Activated naive CD4-positive, alpha-beta T cell treated with anti-CD3 and anti-CD28 coated beads for 36 hours (primary cell): ENCODE measurements at regions of chr2 and their contacts with region 1.

Region 1: GRCh38 chr2:197113275-197113711 is 186.8 kb upstream of the PGAP1 start:
- DNase-seq: no peak
- H3K4me3 Mint-ChIP-seq: no peak overlapping the region
- H3K27ac Mint-ChIP-seq: peak overlapping the region; percentile 28
- H3K4me1 Mint-ChIP-seq: peaks cover 22% of the 10 kb centered on the region
- H3K27me3 Mint-ChIP-seq: no peaks in the 10 kb centered on the region

Region 2: GRCh38 chr2:197097578-197098366 is 15.5 kb before region 1 on chr2:
- CTCF ChIA-PET with region 1: interaction called, 25 read pairs
- intact Hi-C with region 1: no loop called
- DNase-seq: no peak
- H3K4me3 Mint-ChIP-seq: no peak overlapping the region
- H3K27ac Mint-ChIP-seq: no peak overlapping the region
- H3K4me1 Mint-ChIP-seq: peaks cover 12% of the 10 kb centered on the region
- H3K27me3 Mint-ChIP-seq: no peaks in the 10 kb centered on the region

Region 3: DNA sequence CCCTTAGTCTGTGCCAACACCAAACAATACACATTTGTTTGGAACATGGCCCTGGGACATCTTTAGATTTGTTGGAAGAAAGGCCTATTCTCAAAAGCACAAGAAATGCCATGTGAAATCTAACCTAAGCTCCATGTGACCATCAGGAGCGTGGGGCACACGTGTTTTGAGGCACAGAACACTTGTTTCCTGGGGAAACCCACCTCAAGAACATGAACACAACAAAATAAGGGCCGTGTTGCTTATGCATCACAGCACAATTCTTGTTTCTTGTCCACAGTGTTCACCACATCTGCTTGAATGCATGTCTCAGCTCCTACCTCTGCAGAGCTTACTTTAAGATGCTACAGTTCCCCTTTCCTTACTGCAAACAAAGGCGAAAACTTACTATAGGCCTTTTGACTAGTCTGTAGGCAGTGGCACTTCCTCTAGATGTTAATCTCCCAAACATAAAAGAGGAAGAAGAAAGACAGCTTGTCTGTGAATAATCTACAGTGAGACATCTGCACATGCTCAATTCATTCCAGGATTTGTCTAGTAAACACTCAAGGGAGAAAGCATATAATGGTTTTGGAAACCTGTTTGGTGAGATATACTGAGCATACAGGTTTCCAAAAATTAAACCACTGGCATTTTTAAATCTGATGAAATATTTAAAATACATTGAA is 32.3 kb after region 1 on chr2:
- CTCF ChIA-PET with region 1: interaction called, 11 read pairs
- intact Hi-C with region 1: no loop called
- DNase-seq: peak; percentile 16
- H3K4me3 Mint-ChIP-seq: no peak overlapping the region
- H3K27ac Mint-ChIP-seq: peak overlapping the region; percentile 85
- H3K4me1 Mint-ChIP-seq: peaks cover 70% of the 10 kb centered on the region
- H3K27me3 Mint-ChIP-seq: no peaks in the 10 kb centered on the region

Region 4: GRCh38 chr2:197174539-197175094 is 61.3 kb after region 1 on chr2:
- CTCF ChIA-PET with region 1: interaction called, 78 read pairs
- intact Hi-C with region 1: no loop called
- DNase-seq: no peak
- H3K4me3 Mint-ChIP-seq: no peak overlapping the region
- H3K27ac Mint-ChIP-seq: no peak overlapping the region
- H3K4me1 Mint-ChIP-seq: peaks cover 48% of the 10 kb centered on the region
- H3K27me3 Mint-ChIP-seq: no peaks in the 10 kb centered on the region

Region 5: GRCh38 chr2:197198890-197199289 is 85.6 kb after region 1 on chr2:
- CTCF ChIA-PET with region 1: interaction called, 18 read pairs
- intact Hi-C with region 1: no loop called
- DNase-seq: peak; percentile 93
- H3K4me3 Mint-ChIP-seq: peak overlapping the region; percentile 83
- H3K27ac Mint-ChIP-seq: peak overlapping the region; percentile 96
- H3K4me1 Mint-ChIP-seq: peaks cover 86% of the 10 kb centered on the region
- H3K27me3 Mint-ChIP-seq: no peaks in the 10 kb centered on the region

Region 6: GRCh38 chr2:197378494-197379307 is 265.4 kb after region 1 on chr2:
- CTCF ChIA-PET with region 1: interaction called, 41 read pairs
- intact Hi-C with region 1: loop called (anchors 1 kb)
- DNase-seq: peak; percentile 78
- H3K4me3 Mint-ChIP-seq: peak overlapping the region; percentile 22
- H3K27ac Mint-ChIP-seq: no peak overlapping the region
- H3K4me1 Mint-ChIP-seq: peaks cover 15% of the 10 kb centered on the region
- H3K27me3 Mint-ChIP-seq: peaks cover 5% of the 10 kb centered on the region

Region 7: GRCh38 chr2:198144660-198145059 is 1031.4 kb after region 1 on chr2:
- CTCF ChIA-PET with region 1: no interaction called
- intact Hi-C with region 1: no loop called
- DNase-seq: no peak
- H3K4me3 Mint-ChIP-seq: no peak overlapping the region
- H3K27ac Mint-ChIP-seq: no peak overlapping the region
- H3K4me1 Mint-ChIP-seq: peaks cover 15% of the 10 kb centered on the region
- H3K27me3 Mint-ChIP-seq: no peaks in the 10 kb centered on the region